ENCODE measurements at regions of chr2 and their contacts with region 1.

Region 1: DNA sequence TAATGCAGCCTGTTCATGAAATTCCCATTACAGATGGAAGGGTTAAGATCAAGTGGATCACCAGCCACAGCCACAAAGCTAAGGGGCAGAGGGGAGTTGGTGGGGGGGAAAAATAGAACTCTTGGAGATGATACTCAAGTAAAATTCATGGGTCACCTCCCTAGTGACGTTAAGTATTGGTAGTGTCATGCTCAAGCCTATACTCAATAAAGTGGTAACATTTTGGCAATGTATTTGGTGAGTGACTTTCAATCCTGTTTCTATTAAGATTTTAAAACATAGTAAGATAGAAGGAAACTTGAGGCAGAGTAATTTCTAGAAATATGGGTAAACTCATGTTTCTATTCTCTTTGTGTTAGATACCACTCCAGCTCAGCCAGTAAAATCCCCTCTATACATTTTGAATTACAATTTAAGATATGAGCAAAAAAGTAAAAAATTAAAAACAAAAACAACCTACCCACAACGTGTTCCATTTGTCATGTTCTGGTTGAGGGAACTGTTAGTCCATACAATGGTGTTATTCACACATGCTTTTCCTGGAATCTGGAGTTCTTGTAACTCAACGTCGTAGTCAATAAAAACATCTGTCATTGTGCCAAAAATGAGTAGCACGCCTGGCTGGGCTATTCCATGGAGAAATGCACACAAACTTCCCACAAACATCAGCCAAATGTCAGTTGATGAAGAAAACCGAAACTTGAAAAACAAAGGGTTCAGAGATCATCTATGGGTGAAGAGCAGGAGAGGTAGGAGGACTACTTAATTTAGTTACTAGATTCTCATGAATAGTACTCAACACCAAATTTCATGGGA is 18.1 kb downstream of the ABCB11 start:
- DNase-seq: no peak
- ATAC-seq: no peak
- H3K4me3 ChIP-seq: no peak overlapping the region
- H3K27ac ChIP-seq: no peak overlapping the region
- H3K4me1 ChIP-seq: peaks cover 12 to 48% of the 10 kb centered on the region in 2 experiments; a peak in 4 of 5 replicates
- H3K27me3 ChIP-seq: no peaks in the 10 kb centered on the region
- CTCF ChIP-seq: no peak
- EP300 ChIP-seq: no peak
- POLR2A ChIP-seq: no peak
- RAD21 ChIP-seq: no peak

Region 2: DNA sequence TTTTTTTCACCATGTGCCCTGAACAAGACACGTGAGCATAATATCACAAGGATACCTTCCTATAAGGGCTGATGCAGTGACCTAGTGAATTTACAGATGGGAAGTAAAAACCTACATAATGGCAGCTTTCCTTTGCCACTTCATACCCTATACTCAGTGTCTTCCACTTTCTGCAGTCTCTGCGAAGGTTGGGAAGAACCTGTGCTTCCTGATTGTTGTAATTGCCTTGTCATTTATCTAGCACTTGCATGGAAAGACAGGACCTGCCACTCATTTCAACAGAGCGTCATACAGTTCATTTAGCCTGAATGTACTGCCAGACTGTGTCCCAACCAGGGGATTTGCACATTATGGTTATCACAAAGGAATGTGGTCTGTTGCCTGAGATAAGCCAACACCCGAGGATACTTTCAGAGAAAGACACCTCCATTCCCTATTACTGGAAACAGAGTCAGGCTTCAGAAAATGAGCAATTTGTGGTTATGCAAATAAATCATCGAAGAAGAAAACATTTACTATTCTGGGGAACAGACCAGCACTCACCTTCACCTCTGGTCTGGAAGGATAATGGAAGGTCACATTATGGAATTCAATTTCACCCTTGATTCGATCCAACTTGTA is 36.9 kb before region 1 on chr2:
- CTCF ChIA-PET with region 1: no interaction called
- POLR2A ChIA-PET with region 1: no interaction called
- in situ Hi-C with region 1: no loop called
- intact Hi-C with region 1: loop called (anchors 2 kb)
- DNase-seq: peak; percentile 65 to 98 (median 81)
- ATAC-seq: peak; percentile 98
- H3K4me3 ChIP-seq: no peak overlapping the region
- H3K27ac ChIP-seq: peak overlapping the region; percentile 70
- H3K4me1 ChIP-seq: peaks cover 4 to 10% of the 10 kb centered on the region in 2 experiments; a peak in 3 of 5 replicates
- H3K27me3 ChIP-seq: no peaks in the 10 kb centered on the region
- CTCF ChIP-seq: no peak
- EP300 ChIP-seq: peak; percentile 99
- POLR2A ChIP-seq: no peak
- RAD21 ChIP-seq: peak in 1 of 2 experiments; percentile 55; a peak in 2 of 4 replicates

Region 3: DNA sequence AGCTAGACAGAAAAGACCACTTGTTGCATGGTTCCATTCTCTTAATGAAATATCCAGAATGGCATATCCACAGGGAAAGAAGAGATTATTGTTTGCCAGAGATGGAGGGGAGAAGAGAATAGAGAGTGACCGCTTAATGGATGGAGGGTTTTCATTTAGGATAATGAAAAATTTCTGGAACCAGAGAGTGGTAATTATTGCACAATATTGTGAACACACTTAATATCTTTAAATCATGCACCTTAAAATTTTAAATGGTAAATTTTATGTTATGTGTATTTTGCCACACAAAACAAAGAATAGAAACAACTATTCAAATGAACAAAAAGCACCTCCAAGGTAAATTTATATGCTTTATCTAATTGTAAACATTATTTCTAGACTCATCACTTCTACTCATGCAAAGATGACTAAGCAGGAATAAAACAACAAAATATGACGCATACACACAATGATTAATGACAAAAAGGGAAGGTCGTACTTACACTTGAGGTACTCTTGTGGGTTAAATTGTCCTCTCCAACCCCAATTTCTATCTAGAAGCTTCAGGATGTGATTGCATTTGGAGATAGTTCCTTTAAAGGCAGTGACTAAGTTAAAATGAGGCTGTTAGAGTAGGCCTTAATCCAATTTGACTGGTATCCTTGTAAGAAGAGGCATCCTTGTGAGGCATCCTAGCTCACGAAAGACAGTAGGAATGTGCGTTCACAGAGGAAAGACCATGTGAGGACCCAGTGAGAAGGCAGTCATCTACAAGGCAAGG is 37.6 kb after region 1 on chr2:
- CTCF ChIA-PET with region 1: no interaction called
- POLR2A ChIA-PET with region 1: no interaction called
- in situ Hi-C with region 1: no loop called
- intact Hi-C with region 1: loop called (anchors 5 kb)
- DNase-seq: peak; percentile 54 to 81 (median 63)
- ATAC-seq: peak; percentile 93
- H3K4me3 ChIP-seq: no peak overlapping the region
- H3K27ac ChIP-seq: peak overlapping the region; percentile 87
- H3K4me1 ChIP-seq: peaks cover 0 to 18% of the 10 kb centered on the region in 2 experiments; a peak in 3 of 5 replicates
- H3K27me3 ChIP-seq: no peaks in the 10 kb centered on the region
- CTCF ChIP-seq: no peak
- EP300 ChIP-seq: peak; percentile 87
- POLR2A ChIP-seq: no peak
- RAD21 ChIP-seq: 0 out of 4 replicates have a peak, but pooled peaks of 1 of the 2 experiments have one; percentile 22

Region 4: DNA sequence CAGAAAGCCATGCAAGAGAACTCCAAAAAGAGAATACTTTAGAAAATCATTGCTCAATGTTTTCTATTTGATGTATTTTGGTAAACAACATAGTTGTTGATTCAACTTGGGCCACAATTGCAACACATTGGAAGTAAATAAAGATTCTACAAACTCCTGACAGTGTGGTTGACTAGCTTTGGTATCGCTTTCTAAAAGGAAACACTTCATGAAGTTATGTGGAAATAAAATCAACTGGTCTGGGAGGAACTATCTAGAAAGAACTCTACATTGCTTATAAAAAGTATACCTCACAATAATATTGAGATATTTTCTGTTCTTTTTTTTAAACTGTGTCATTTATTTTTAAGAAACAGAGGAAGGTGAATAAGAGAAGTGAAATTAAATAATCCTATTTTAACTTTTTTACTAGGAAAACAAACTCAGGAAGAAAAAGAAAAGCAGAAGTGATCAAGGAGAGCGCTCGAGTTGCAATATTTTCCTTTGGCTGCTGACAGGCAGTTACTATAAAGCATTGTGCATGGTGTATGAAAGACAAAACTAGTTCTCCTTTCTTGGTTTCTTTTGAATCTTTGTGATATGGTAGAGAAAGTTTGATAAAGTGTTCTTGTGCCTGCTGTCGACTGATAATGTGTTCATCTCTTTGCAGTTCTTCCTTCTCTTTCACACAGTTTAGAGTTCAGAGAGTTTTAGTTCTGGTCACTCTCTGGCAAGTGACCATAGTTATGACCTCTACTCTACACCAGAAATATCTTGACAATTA is 59.3 kb after region 1 on chr2:
- CTCF ChIA-PET with region 1: no interaction called
- POLR2A ChIA-PET with region 1: no interaction called
- in situ Hi-C with region 1: no loop called
- intact Hi-C with region 1: loop called (anchors 5 kb)
- DNase-seq: peak in 2 of 4 experiments; percentile 52 to 79
- ATAC-seq: peak; percentile 84
- H3K4me3 ChIP-seq: no peak overlapping the region
- H3K27ac ChIP-seq: peak overlapping the region; percentile 62
- H3K4me1 ChIP-seq: peaks cover 7 to 46% of the 10 kb centered on the region in 2 experiments; a peak in 4 of 5 replicates
- H3K27me3 ChIP-seq: no peaks in the 10 kb centered on the region
- CTCF ChIP-seq: no peak
- EP300 ChIP-seq: peak; percentile 83
- POLR2A ChIP-seq: no peak
- RAD21 ChIP-seq: peak in 1 of 2 experiments; percentile 38; a peak in 2 of 4 replicates

Region 5: DNA sequence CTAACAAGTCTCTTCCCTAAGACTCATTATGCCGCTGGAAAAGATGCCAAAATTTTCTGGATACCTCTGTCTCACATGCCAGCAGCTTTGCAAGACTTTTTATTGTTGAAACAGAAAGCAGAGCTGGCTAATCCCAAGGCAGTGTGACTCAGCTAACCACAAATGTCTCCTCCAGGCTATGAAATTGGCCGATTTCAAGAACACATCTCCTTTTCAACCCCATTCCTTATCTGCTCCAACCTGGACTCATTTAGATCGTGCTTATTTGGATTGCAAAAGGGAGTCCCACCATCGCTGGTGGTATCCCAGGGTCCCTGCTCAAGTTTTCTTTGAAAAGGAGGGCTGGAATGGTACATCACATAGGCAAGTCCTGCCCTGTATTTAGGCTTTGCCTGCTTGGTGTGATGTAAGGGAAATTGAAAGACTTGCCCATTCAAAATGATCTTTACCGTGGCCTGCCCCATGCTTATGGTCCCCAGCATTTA is 82.6 kb after region 1 on chr2:
- CTCF ChIA-PET with region 1: no interaction called
- POLR2A ChIA-PET with region 1: no interaction called
- in situ Hi-C with region 1: no loop called
- intact Hi-C with region 1: loop called (anchors 5 kb)
- DNase-seq: peak; percentile 24 to 83 (median 49)
- ATAC-seq: peak; percentile 92
- H3K4me3 ChIP-seq: no peak overlapping the region
- H3K27ac ChIP-seq: no peak overlapping the region
- H3K4me1 ChIP-seq: peaks cover 0 to 18% of the 10 kb centered on the region in 2 experiments; a peak in 3 of 5 replicates
- H3K27me3 ChIP-seq: no peaks in the 10 kb centered on the region
- CTCF ChIP-seq: no peak
- EP300 ChIP-seq: peak; percentile 63; the same call in 1 of the 2 replicates
- POLR2A ChIP-seq: no peak
- RAD21 ChIP-seq: peak; percentile 17 to 22; a peak in 2 of 4 replicates

Measured in K562 (cell line).